Psoas muscle (tissue), 8 donors: ENCODE measurements at regions of chr15 and their contacts with region 1.

Region 1: DNA sequence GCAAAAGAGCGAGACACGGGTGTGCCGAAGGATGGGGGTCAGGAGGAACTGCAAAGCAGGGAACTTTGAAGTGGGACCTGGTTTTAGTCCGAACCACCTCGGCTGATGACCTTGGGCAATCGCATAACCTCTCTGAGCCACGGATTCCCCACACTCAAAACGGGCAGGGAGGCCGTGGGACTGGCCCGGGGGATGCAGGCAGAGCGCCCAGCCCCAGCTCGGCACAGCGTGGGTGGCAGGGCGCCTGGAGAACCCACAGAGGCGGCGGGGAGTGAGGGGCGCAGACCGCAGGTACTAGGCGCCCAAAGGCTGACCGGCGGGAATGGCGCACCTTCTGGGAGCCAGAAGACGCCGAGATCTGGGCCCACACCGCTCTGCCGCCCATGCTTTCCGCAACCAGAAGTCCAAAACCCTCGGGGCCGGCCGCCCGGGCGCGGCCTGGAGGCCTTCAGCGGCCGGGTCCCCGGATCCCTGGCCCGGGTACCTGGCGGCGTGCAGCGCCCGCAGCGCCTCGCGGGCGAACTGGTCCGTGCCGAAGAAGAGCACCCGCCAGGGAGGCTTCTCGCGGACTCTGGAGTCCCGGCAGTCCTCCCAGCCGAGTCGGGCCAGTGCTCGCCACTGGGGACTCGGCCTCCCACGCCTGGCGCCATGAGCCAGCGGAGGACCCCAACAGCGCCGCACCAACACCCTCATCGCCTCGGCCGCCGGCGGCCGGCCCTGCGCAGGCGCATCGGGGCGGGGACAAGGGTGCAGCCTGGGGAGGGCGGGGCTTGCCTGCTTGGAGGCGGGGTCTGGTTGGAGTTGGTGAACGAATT is at the start of gene MTFMT:
- DNase-seq: peak; percentile 93 to 96
- ATAC-seq: peak; percentile 94 to 98 (median 96)
- H3K4me3 ChIP-seq: peak within 1 kb of the TSS; percentile 95
- H3K27ac ChIP-seq: peak within 1 kb of the TSS; percentile 78
- H3K4me1 ChIP-seq: peaks cover 14% of the 10 kb centered on the region
- H3K27me3 ChIP-seq: no peaks in the 10 kb centered on the region
- CTCF ChIP-seq: peak; percentile 5
- total RNA-seq, gene MTFMT: 9.5 to 18.1 (median 14.8) TPM

Region 2: DNA sequence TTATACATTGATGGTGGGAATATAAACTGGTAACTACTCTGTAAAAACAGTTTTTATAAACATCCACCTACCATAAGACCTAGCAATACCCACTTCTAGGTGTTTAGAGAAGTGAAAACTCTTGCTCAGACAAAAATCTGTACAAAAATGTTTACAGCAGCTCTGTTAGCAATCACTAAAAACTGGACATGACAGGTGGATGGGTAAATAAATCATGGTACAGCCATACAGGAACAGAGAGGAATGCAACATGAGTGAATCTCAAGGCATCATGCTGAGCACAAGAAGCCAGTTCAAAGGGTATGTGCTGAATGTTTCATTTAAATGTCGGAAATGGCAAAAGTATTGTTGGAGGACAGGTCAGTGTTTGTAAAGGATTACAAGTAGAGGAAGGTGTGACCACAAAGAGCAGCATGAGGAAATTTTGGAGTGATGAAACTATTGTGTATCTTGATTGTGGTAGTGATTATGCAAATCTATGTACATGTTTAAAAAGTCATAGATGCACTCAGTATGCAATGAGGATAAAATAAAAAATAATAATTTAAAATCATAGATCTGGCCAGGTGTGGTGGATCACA is 263.9 kb after region 1 on chr15:
- intact Hi-C with region 1: loop called in 1 of 2 experiments (anchors 10 kb)
- DNase-seq: no peak
- ATAC-seq: no peak
- H3K4me3 ChIP-seq: no peak overlapping the region
- H3K27ac ChIP-seq: no peak overlapping the region
- H3K4me1 ChIP-seq: peaks cover 13% of the 10 kb centered on the region
- H3K27me3 ChIP-seq: no peaks in the 10 kb centered on the region
- CTCF ChIP-seq: no peak